ENCODE measurements at regions of chr22 and their contacts with region 1.

Region 1: DNA sequence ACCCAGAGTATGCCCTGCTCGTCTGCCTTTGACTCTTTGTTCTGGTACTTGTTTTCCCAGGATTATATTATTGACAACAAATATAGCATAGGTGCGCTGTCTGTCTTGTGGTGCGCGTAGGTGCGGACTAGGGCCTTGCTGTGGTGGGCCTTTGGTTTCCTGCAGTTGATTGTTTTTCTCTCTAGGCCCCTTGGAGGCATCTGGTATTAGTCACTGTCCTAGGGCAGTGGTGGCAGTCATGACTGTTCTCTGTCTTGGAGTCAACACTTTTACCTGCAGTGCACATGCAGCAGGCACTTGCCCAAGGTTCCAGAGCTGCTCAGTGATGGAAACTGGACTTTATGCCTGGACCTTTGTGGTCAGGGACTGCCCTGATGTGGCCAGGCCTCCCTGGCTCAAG is 18.6 kb downstream of the PPP6R2 start:
- DNase-seq: peak in 2 of 5 donors; percentile 10 to 51
- H3K4me3 ChIP-seq: no peak overlapping the region
- H3K4me3 Mint-ChIP-seq: peak overlapping the region in 6 of 7 donors; percentile 34 to 67 (median 54)
- H3K27ac ChIP-seq: no peak overlapping the region
- H3K27ac Mint-ChIP-seq: peak overlapping the region; percentile 77 to 97 (median 89)
- H3K4me1 ChIP-seq: peaks cover 33% of the 10 kb centered on the region
- H3K4me1 Mint-ChIP-seq: peaks cover 55 to 77% (median 72%) of the 10 kb centered on the region in 3 donors
- H3K27me3 ChIP-seq: no peaks in the 10 kb centered on the region
- H3K27me3 Mint-ChIP-seq: no peaks in the 10 kb centered on the region

Region 2: DNA sequence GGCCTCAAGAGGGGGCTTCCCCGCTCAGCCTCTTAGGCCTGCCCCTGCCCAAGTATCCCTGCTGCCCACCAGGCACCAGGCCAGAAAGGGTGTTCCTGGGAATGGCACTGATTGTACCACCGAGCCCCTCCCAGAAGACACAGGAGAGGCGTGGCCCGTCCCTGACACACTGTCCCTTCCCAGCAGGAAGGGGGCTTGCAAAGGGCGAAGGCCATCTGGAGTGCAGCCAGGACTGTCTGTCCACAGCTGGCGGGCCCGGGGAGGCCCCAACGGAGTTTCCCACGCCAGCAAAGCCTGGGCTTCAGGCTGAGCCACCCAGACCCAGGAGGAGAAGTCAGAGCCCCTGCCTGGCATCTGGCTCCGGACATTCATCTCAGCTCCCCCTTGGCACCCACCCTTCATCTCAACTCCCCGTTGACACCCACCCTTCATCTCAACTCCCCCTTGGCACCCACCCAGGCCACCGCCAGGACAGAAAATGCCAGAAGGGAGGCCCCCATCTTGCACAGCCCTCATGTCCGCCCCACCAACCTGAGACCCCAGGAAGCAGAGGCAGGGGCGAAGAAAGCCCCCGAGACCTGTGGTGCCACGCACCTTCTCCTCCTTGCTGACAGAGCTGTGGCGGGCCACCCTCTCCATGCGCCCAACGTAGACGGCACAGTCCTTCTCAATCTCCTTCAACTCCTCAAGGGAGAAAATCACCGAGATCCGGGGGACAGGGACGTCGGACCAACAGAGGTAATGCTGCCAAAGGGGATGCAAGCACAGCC is 136.3 kb before region 1 on chr22:
- CTCF ChIA-PET with region 1: no interaction called
- POLR2A ChIA-PET with region 1: interaction called, 10 read pairs
- DNase-seq: no peak
- H3K4me3 ChIP-seq: no peak overlapping the region
- H3K4me3 Mint-ChIP-seq: no peak overlapping the region
- H3K27ac ChIP-seq: no peak overlapping the region
- H3K27ac Mint-ChIP-seq: no peak overlapping the region
- H3K4me1 ChIP-seq: no peaks in the 10 kb centered on the region
- H3K4me1 Mint-ChIP-seq: peaks cover 0 to 5% (median 4%) of the 10 kb centered on the region in 3 donors
- H3K27me3 ChIP-seq: no peaks in the 10 kb centered on the region
- H3K27me3 Mint-ChIP-seq: no peaks in the 10 kb centered on the region

Measured in CD8-positive, alpha-beta memory T cell (primary cell).